PC-3 (cell line): ENCODE measurements at regions of chr1 and their contacts with region 1.

Region 1: DNA sequence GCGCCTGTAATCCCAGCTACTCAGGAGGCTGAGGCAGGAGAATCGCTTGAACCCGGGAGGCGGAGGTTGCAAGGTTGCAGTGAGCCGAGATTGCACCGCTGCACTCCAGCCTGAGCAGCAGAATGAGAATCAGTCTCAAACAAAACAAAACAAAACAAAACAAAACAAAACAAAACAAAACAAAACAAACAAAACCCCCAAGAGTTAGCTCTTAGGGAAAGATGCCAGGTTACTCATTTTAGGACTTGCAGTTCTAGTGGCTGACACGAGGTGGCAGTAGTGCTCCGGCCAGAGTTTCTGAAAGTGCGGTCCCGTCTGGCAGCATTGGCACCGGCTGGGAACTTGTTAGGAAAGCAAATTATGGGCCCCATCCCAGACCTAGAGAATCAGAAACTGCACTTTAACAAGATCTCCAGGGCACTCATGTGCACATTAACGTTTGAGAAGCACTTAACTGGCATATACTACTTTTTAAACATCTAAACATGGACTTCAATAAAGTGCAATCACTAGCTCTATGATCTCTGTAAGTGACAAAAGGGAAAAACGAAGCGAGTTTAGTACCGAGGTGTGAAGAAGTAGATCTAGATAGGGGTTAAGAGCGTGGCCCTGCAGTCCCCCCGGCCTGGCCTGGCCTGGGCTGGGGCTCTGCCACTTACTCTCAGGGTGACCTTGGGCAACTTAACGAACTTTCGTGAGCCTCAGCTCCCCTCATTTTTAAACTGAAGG is 41.9 kb upstream of the TNFRSF1B start:
- DNase-seq: peak; percentile 83
- ATAC-seq: peak; percentile 70
- H3K4me3 ChIP-seq: no peak overlapping the region
- H3K27ac ChIP-seq: no peak overlapping the region
- H3K4me1 ChIP-seq: no peaks in the 10 kb centered on the region
- H3K27me3 ChIP-seq: no peaks in the 10 kb centered on the region
- CTCF ChIP-seq: peak; percentile 87

Region 2: GRCh38 chr1:11882814-11883538 is 241.9 kb before region 1 on chr1:
- CTCF ChIA-PET with region 1: no interaction called
- POLR2A ChIA-PET with region 1: no interaction called
- intact Hi-C with region 1: no loop called
- DNase-seq: no peak
- ATAC-seq: peak; percentile 48; the same call in 1 of the 2 replicates
- H3K4me3 ChIP-seq: no peak overlapping the region
- H3K27ac ChIP-seq: no peak overlapping the region
- H3K4me1 ChIP-seq: no peaks in the 10 kb centered on the region
- H3K27me3 ChIP-seq: 0 out of 2 replicates have a peak, but pooled peaks cover 4% of the 10 kb centered on the region
- CTCF ChIP-seq: no peak

Region 3: GRCh38 chr1:12107736-12108135 is 17.1 kb before region 1 on chr1:
- CTCF ChIA-PET with region 1: no interaction called
- POLR2A ChIA-PET with region 1: no interaction called
- intact Hi-C with region 1: no loop called
- DNase-seq: no peak
- ATAC-seq: no peak
- H3K4me3 ChIP-seq: no peak overlapping the region
- H3K27ac ChIP-seq: no peak overlapping the region
- H3K4me1 ChIP-seq: no peaks in the 10 kb centered on the region
- H3K27me3 ChIP-seq: no peaks in the 10 kb centered on the region
- CTCF ChIP-seq: no peak

Region 4: GRCh38 chr1:12208764-12209494 is 84.1 kb after region 1 on chr1:
- CTCF ChIA-PET with region 1: interaction called, 11 read pairs
- POLR2A ChIA-PET with region 1: interaction called, 7 read pairs
- intact Hi-C with region 1: loop called (anchors 1 kb)
- DNase-seq: peak; percentile 87
- ATAC-seq: peak; percentile 95
- H3K4me3 ChIP-seq: no peak overlapping the region
- H3K27ac ChIP-seq: no peak overlapping the region
- H3K4me1 ChIP-seq: no peaks in the 10 kb centered on the region
- H3K27me3 ChIP-seq: peaks cover 3% of the 10 kb centered on the region; the same call in 1 of the 2 replicates
- CTCF ChIP-seq: peak; percentile 89

Region 5: DNA sequence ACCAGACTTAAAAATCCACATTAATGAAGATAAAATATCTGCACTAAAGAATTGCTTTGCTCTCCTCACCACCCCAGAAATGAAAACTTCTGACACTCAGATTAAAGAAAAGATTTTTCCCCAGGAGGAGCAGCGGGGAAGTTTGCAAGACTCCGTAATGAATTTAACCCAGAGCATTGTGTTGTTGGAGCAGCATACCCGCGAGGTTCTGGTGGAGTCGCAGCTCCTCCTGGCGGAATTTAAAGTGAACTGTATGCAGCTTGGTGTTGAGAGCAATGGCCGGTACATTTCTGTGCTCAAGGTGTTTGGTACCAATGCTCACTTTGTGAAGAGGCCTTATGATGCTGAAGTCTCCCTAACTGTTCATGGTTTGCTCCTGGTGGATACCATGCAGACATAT is 151.4 kb after region 1 on chr1:
- CTCF ChIA-PET with region 1: interaction called, 3 read pairs
- POLR2A ChIA-PET with region 1: no interaction called
- intact Hi-C with region 1: loop called (anchors 2 kb)
- DNase-seq: peak; percentile 53
- ATAC-seq: peak; percentile 52; the same call in 1 of the 2 replicates
- H3K4me3 ChIP-seq: no peak overlapping the region
- H3K27ac ChIP-seq: no peak overlapping the region
- H3K4me1 ChIP-seq: no peaks in the 10 kb centered on the region
- H3K27me3 ChIP-seq: no peaks in the 10 kb centered on the region
- CTCF ChIP-seq: peak; percentile 65